Activated CD8-positive, alpha-beta T cell treated with anti-CD3 and anti-CD28 coated beads for 36 hours (primary cell): ENCODE measurements at regions of chr11 and their contacts with region 1.

Region 1: DNA sequence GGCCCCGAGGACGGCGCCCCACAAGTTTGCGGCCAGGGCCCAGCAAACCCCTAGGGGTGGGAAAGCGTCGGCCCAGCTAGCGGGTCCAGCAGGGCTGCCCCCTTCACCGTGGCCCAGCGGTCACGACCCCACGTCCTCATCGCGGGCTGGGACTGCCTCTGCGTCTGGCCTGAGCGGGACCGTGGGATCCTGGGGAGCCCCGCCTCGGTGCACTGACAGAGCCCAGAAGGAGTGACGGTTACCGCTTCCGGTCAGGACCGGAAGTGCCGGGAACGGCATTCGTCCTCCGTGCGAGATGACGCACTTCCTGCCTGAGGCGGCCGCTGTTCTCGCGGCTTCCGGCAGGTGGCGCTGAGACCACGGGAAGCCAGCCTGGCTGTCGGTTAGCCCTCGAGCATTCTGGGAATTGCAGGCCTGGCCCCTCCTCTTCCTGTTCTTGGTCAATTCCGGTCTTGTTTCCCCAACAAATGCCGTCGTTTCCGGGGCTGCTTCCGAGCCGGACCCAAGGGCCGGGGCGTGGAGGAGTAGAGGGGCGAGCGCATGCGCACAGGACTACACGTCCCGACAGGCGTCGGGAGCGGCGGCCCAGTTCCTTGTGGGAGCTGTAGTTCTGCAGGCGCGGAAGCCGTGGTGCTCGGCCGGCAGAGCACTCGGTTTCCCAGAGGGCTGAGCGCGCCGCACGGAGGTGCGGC is at the start of gene TSSC4:
- DNase-seq: peak; percentile 99
- ATAC-seq: peak; percentile 92
- H3K4me3 Mint-ChIP-seq: peak within 1 kb of the TSS; percentile 84
- H3K27ac Mint-ChIP-seq: peak within 1 kb of the TSS; percentile 85
- H3K4me1 Mint-ChIP-seq: peaks cover 12% of the 10 kb centered on the region
- H3K27me3 Mint-ChIP-seq: no peaks in the 10 kb centered on the region
- CTCF ChIP-seq: peak; percentile 90
- total RNA-seq, gene TSSC4: 36.2 to 38.9 TPM

Region 2: DNA sequence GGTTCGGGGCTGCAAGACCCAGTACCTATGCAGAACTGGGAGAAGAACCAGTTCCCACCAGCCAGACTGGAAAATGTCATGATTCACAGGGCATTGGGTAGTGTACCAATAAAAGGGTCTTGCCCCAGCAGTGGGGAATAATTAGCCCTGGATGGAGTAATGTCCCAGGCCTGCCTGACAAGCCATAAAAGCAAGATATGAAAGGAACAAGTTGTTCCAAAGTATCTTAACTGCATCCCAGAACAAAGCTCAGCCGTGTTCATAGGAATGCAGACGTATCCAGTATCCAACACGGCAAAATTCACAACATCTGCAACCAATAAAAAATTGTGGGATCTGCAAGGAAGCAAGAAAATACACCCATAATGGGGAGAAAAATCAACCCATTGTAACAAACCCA is 177.8 kb before region 1 on chr11:
- CTCF ChIA-PET with region 1: no interaction called
- POLR2A ChIA-PET with region 1: no interaction called
- intact Hi-C with region 1: no loop called
- DNase-seq: no peak
- ATAC-seq: no peak
- H3K4me3 Mint-ChIP-seq: no peak overlapping the region
- H3K27ac Mint-ChIP-seq: no peak overlapping the region
- H3K4me1 Mint-ChIP-seq: no peaks in the 10 kb centered on the region
- H3K27me3 Mint-ChIP-seq: peaks cover 4% of the 10 kb centered on the region
- CTCF ChIP-seq: no peak

Region 3: DNA sequence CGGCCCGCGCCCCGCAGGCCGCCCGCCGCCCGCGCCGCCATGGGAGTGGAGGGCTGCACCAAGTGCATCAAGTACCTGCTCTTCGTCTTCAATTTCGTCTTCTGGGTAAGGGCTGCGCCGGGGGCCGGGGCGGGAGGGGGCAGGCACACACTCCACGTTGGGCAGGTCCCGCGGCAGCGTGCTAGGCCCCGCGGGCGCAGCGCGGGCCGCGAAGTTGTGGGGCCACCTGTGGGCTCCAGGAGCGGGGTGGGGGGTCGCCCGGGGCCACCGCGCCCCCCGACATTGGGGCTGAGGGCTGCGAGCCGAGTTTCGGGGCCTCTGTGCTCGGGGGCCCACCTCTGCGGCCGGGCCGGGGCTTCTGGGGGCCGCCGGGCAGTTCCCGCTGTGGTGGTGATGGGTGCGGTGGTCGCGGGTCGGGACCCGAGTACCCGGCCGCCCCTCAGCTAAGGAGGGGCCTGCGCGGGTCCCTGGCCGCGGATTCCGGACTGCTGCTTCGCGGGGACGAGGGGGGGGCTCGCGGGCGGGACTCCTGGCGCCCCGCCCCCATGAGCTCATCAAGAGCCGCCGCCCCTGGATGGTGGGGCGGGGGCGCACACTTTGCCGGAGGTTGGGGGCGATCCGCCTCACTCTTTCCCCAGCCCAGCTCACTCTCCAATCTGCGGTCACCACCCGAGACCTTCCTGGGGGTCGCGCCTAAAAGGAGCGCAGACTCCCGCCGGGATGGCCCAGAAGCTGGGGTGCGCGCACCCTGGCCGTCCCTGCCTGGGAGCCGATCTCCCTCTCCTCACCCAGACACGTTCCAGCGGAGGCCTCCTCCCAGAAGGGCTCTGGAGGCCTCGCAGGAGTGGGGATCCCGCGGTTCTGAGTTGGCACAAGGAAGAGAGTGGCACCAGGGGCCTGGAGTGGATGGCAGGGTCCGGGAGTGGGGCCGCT is 22.4 kb before region 1 on chr11:
- CTCF ChIA-PET with region 1: interaction called, 12 read pairs
- POLR2A ChIA-PET with region 1: interaction called, 8 read pairs
- intact Hi-C with region 1: no loop called
- DNase-seq: peak; percentile 73
- ATAC-seq: peak; percentile 46
- H3K4me3 Mint-ChIP-seq: peak overlapping the region; percentile 88
- H3K27ac Mint-ChIP-seq: peak overlapping the region; percentile 84
- H3K4me1 Mint-ChIP-seq: peaks cover 30% of the 10 kb centered on the region
- H3K27me3 Mint-ChIP-seq: no peaks in the 10 kb centered on the region
- CTCF ChIP-seq: no peak

Region 4: GRCh38 chr11:2411446-2412305 is 11.5 kb after region 1 on chr11:
- CTCF ChIA-PET with region 1: no interaction called
- POLR2A ChIA-PET with region 1: no interaction called
- intact Hi-C with region 1: no loop called
- DNase-seq: no peak
- ATAC-seq: no peak
- H3K4me3 Mint-ChIP-seq: no peak overlapping the region
- H3K27ac Mint-ChIP-seq: no peak overlapping the region
- H3K4me1 Mint-ChIP-seq: no peaks in the 10 kb centered on the region
- H3K27me3 Mint-ChIP-seq: no peaks in the 10 kb centered on the region
- CTCF ChIP-seq: no peak